Left ventricle myocardium inferior (tissue), 1 donor: ENCODE measurements at regions of chr4 and their contacts with region 1.

Region 1: DNA sequence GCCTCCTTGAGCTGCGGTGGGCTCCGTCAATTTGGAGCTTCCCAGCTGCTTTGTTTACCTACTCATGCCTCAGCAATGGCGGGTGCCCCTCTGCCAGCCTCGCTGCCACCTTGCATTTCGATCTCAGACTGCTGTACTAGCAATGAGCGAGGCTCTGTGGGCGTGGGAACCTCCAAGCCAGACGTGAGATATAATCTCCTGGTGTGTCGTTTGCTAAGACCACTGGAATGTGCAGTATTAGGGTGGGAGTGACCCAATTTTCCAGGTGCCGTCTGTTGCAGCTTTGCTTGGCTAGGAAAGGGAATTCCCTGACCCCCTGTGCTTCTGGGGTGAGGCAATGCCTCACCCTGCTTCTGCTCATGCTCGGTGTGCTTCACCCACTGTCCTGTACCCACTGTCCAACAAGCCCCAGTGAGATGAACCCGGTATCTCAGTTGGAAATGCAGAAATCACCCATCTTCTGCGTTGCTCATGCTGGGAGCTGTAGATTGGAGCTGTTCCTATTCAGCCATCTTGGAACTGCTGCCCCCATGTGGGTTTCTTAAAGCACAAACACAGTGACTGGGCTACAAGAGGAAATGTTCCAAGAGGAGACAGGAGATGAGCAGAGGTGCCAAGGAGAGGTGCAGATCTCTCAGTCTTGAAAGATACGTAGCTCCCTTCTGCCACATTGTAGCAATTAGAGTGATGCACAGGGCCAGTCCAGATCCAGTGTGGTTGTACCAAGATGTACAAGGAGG is 193.0 kb upstream of the IGFBP7 start:
- DNase-seq: no peak
- H3K4me3 ChIP-seq: no peak overlapping the region
- H3K27ac ChIP-seq: no peak overlapping the region
- H3K4me1 ChIP-seq: no peaks in the 10 kb centered on the region
- H3K27me3 ChIP-seq: no peaks in the 10 kb centered on the region
- CTCF ChIP-seq: peak; percentile 53

Region 2: GRCh38 chr4:57163530-57164459 is 139.4 kb before region 1 on chr4:
- intact Hi-C with region 1: loop called (anchors 10 kb)
- DNase-seq: peak; percentile 84
- H3K4me3 ChIP-seq: peak overlapping the region; percentile 72
- H3K27ac ChIP-seq: peak overlapping the region; percentile 79
- H3K4me1 ChIP-seq: peaks cover 14% of the 10 kb centered on the region
- H3K27me3 ChIP-seq: peaks cover 8% of the 10 kb centered on the region
- CTCF ChIP-seq: peak; percentile 80

Region 3: DNA sequence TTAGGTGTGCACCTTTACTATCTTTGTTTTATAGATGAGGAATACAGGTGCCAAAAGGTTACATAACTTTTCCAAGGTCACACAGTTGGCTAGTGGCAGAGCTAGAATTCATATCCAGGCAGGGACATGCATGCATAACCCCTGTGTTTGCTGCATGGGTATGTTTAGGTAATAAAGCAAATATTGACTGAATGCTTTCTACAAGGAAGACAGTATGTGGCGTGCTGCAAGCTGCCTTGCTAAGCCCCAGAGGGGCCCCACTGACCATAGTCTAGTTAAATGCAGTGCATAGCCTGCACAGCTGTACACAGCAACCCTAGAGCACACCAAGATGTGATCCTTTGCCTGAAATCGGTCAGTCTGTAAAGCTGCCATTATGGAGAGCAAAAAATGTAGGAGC is 127.5 kb after region 1 on chr4:
- intact Hi-C with region 1: no loop called
- DNase-seq: no peak
- H3K4me3 ChIP-seq: no peak overlapping the region
- H3K27ac ChIP-seq: no peak overlapping the region
- H3K4me1 ChIP-seq: no peaks in the 10 kb centered on the region
- H3K27me3 ChIP-seq: peaks cover 3% of the 10 kb centered on the region
- CTCF ChIP-seq: no peak